ENCODE measurements at regions of chr4 and their contacts with region 1.

Region 1: DNA sequence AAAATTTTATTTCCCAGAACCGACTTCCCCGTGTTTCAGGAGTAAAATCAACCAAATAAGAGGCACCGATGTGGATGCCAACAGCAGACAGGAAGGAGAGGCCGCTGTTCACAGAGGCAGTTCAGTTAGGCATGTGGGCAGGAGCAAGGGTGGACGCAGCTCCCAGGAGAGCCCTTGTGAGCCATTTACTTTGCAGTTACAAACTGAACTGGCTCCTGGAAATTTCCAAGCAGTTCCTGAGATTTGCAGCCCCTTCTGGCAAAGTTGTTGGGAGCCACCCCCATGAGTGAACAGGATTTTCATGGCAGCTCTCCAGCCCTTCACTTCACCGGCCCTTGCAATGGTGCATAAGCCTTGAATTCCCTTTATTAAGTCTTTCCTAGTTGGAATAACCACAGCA is 189.1 kb downstream of the AFAP1 start:
- DNase-seq: no peak
- H3K4me3 ChIP-seq: no peak overlapping the region
- H3K4me3 Mint-ChIP-seq: peak overlapping the region; percentile 66
- H3K27ac Mint-ChIP-seq: peak overlapping the region; percentile 62
- H3K4me1 ChIP-seq: peaks cover 56% of the 10 kb centered on the region
- H3K4me1 Mint-ChIP-seq: peaks cover 53% of the 10 kb centered on the region
- H3K27me3 ChIP-seq: no peaks in the 10 kb centered on the region
- H3K27me3 Mint-ChIP-seq: no peaks in the 10 kb centered on the region
- CTCF ChIP-seq: no peak

Region 2: DNA sequence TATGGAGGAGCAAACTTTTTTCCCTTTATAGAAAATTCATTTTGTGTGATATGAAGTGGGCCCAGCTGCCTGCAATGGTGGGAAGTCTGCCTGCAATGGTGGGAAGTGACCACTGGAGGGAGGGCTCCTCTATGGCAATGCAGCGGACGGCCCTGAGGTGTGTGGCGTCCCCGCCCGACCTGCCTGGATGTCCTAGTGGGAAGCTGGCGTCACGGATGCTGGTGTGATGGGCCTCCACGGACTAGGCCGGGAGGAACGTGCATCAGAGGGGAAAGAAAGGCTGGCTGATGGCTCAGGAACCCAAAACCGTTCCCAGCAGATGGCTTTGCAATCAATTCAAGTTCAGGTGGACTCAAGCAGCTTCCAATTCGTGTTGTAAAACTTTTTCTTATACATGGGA is 11.2 kb after region 1 on chr4:
- CTCF ChIA-PET with region 1: interaction called, 4 read pairs
- POLR2A ChIA-PET with region 1: no interaction called
- intact Hi-C with region 1: loop called (anchors 1 kb)
- DNase-seq: peak; percentile 62 to 72
- H3K4me3 ChIP-seq: no peak overlapping the region
- H3K4me3 Mint-ChIP-seq: no peak overlapping the region
- H3K27ac Mint-ChIP-seq: peak overlapping the region; percentile 42
- H3K4me1 ChIP-seq: peaks cover 17% of the 10 kb centered on the region
- H3K4me1 Mint-ChIP-seq: no peaks in the 10 kb centered on the region
- H3K27me3 ChIP-seq: no peaks in the 10 kb centered on the region
- H3K27me3 Mint-ChIP-seq: no peaks in the 10 kb centered on the region
- CTCF ChIP-seq: peak; percentile 61 to 67

Region 3: DNA sequence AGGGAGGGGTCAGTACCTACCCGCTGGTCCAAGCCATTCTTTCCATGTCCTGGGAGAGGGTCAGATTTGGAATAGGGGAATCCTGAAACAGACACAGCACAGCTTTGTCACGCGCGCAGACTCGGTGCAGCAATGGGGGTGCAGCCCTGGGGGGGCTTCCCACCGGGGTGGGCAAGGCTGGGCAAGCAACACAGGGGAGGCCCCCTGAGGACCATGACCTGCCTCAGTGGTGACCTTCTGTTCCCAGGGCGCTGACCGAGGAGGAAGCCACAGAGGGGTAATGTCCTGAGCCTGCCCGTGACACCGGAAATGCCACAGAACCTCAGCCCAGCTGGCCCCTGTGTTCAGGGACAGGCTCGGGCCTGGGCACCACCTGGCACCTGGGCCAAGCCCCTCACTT is 242.3 kb after region 1 on chr4:
- CTCF ChIA-PET with region 1: no interaction called
- POLR2A ChIA-PET with region 1: no interaction called
- intact Hi-C with region 1: no loop called
- DNase-seq: no peak
- H3K4me3 ChIP-seq: no peak overlapping the region
- H3K4me3 Mint-ChIP-seq: no peak overlapping the region
- H3K27ac Mint-ChIP-seq: no peak overlapping the region
- H3K4me1 ChIP-seq: no peaks in the 10 kb centered on the region
- H3K4me1 Mint-ChIP-seq: peaks cover 7% of the 10 kb centered on the region
- H3K27me3 ChIP-seq: no peaks in the 10 kb centered on the region
- H3K27me3 Mint-ChIP-seq: peaks cover 3% of the 10 kb centered on the region
- CTCF ChIP-seq: no peak

Measured in Caco-2 (cell line).